ENCODE measurements at regions of chr9 and their contacts with region 1.

Region 1: GRCh38 chr9:129884220-129885017 is 49.2 kb downstream of the USP20 start:
- DNase-seq: peak; percentile 83 to 91 (median 83)
- H3K4me3 ChIP-seq: peak overlapping the region; percentile 56 to 90 (median 70)
- H3K4me3 Mint-ChIP-seq: peak overlapping the region; percentile 85 to 95
- H3K27ac ChIP-seq: peak overlapping the region; percentile 84 to 92
- H3K27ac Mint-ChIP-seq: peak overlapping the region; percentile 92 to 98 (median 97)
- H3K4me1 ChIP-seq: peaks cover 53 to 57% of the 10 kb centered on the region in 2 donors
- H3K4me1 Mint-ChIP-seq: peaks cover 52% of the 10 kb centered on the region
- H3K27me3 ChIP-seq: no peaks in the 10 kb centered on the region
- H3K27me3 Mint-ChIP-seq: peaks cover 0 to 3% (median 0%) of the 10 kb centered on the region in 3 donors
- CTCF ChIP-seq: no peak

Region 2: GRCh38 chr9:129835021-129835871 is 49.2 kb before region 1 on chr9 and contains the starts of genes C9orf78 and USP20:
- intact Hi-C with region 1: no loop called
- DNase-seq: peak; percentile 93 to 95 (median 95)
- H3K4me3 ChIP-seq: peak within 1 kb of the TSS; percentile 54 to 88 (median 87)
- H3K4me3 Mint-ChIP-seq: peak within 1 kb of the TSS; percentile 97 to 98
- H3K27ac ChIP-seq: peak within 1 kb of the TSS; percentile 87 to 94
- H3K27ac Mint-ChIP-seq: peak within 1 kb of the TSS; percentile 95 to 98 (median 97)
- H3K4me1 ChIP-seq: peaks cover 20 to 26% of the 10 kb centered on the region in 2 donors
- H3K4me1 Mint-ChIP-seq: peaks cover 32% of the 10 kb centered on the region
- H3K27me3 ChIP-seq: no peaks in the 10 kb centered on the region
- H3K27me3 Mint-ChIP-seq: peaks cover 0 to 3% (median 1%) of the 10 kb centered on the region in 3 donors
- CTCF ChIP-seq: no peak
- polyA plus RNA-seq, gene C9orf78: 53.3 to 82.4 (median 65.5) TPM
- polyA plus RNA-seq, gene USP20: 2.7 to 30.0 (median 5.2) TPM

Region 3: GRCh38 chr9:129944506-129945116 is 60.2 kb after region 1 on chr9:
- intact Hi-C with region 1: loop called (anchors 2 to 5 kb)
- DNase-seq: peak; percentile 80 to 91 (median 87)
- H3K4me3 ChIP-seq: peak overlapping the region in 1 of 3 experiments; percentile 65
- H3K4me3 Mint-ChIP-seq: no peak overlapping the region
- H3K27ac ChIP-seq: peak overlapping the region; percentile 35 to 91
- H3K27ac Mint-ChIP-seq: peak overlapping the region; percentile 90 to 96 (median 95)
- H3K4me1 ChIP-seq: peaks cover 46 to 66% of the 10 kb centered on the region in 2 donors
- H3K4me1 Mint-ChIP-seq: peaks cover 42% of the 10 kb centered on the region
- H3K27me3 ChIP-seq: no peaks in the 10 kb centered on the region
- H3K27me3 Mint-ChIP-seq: no peaks in the 10 kb centered on the region
- CTCF ChIP-seq: peak; percentile 50

Region 4: GRCh38 chr9:129995409-129996160 is 111.2 kb after region 1 on chr9:
- intact Hi-C with region 1: loop called in 1 of 2 experiments (anchors 5 kb)
- DNase-seq: peak; percentile 65 to 86 (median 81)
- H3K4me3 ChIP-seq: peak overlapping the region in 2 of 3 experiments; percentile 29 to 65
- H3K4me3 Mint-ChIP-seq: peak overlapping the region; percentile 57 to 92
- H3K27ac ChIP-seq: peak overlapping the region; percentile 96 to 100
- H3K27ac Mint-ChIP-seq: peak overlapping the region; percentile 99 to 100 (median 99)
- H3K4me1 ChIP-seq: peaks cover 35 to 43% of the 10 kb centered on the region in 2 donors
- H3K4me1 Mint-ChIP-seq: peaks cover 48% of the 10 kb centered on the region
- H3K27me3 ChIP-seq: no peaks in the 10 kb centered on the region
- H3K27me3 Mint-ChIP-seq: no peaks in the 10 kb centered on the region
- CTCF ChIP-seq: no peak

Region 5: DNA sequence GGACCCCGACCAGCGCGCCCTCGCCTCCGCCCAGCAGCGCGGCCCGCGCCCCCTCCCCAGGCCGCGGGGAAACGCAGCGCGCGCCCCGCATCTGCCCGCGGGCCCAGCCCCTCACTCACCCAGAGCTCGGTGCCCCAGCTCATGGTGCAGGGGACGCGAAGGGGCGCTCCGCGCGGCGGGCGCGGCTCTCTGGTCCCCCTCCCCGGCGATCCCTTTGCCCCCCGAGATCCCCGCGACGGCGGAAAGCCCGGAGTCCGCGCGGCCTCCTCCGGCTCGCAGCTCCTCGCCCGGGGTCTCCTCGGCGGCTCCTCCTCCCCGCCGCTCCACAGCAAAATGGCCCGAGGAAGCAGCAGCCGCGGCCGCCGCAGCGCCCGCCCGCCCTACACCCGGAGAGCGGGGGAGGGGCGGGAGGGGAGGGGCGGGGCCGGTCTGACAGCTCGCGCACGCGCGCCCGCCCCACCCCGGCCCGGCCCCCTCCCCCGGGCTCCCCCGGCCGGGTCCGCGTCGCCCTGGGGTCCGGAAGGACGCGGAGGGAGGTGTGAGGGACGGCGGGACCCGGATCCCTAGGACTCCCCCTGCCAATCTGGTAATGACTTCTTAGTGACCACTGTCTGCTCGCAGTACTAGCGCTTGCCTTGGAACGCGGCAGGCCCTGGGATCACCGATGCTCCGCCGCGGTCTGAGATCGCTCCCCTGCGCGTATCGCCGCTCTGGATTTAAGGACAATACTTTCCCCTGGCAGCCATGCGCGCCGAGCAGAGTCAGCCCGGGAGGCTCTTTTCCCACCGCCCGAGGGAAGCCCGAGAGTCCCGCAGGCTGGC is 158.6 kb after region 1 on chr9 and contains the start of gene FNBP1:
- intact Hi-C with region 1: loop called (anchors 5 kb)
- DNase-seq: peak; percentile 68 to 76 (median 71)
- H3K4me3 ChIP-seq: peak within 1 kb of the TSS; percentile 92 to 97 (median 96)
- H3K4me3 Mint-ChIP-seq: peak within 1 kb of the TSS; percentile 100
- H3K27ac ChIP-seq: peak within 1 kb of the TSS; percentile 85 to 90
- H3K27ac Mint-ChIP-seq: peak within 1 kb of the TSS; percentile 94 to 100 (median 96)
- H3K4me1 ChIP-seq: peaks cover 64 to 77% of the 10 kb centered on the region in 2 donors
- H3K4me1 Mint-ChIP-seq: peaks cover 58% of the 10 kb centered on the region
- H3K27me3 ChIP-seq: no peaks in the 10 kb centered on the region
- H3K27me3 Mint-ChIP-seq: no peaks in the 10 kb centered on the region
- CTCF ChIP-seq: no peak
- polyA plus RNA-seq, gene FNBP1: 37.6 to 60.7 (median 51.4) TPM

Region 6: GRCh38 chr9:130090915-130091314 is 206.5 kb after region 1 on chr9:
- intact Hi-C with region 1: loop called (anchors 10 kb)
- DNase-seq: no peak
- H3K4me3 ChIP-seq: no peak overlapping the region
- H3K4me3 Mint-ChIP-seq: no peak overlapping the region
- H3K27ac ChIP-seq: no peak overlapping the region
- H3K27ac Mint-ChIP-seq: peak overlapping the region in 1 of 7 donors; percentile 51
- H3K4me1 ChIP-seq: no peaks in the 10 kb centered on the region
- H3K4me1 Mint-ChIP-seq: no peaks in the 10 kb centered on the region
- H3K27me3 ChIP-seq: no peaks in the 10 kb centered on the region
- H3K27me3 Mint-ChIP-seq: peaks cover 0 to 1% (median 0%) of the 10 kb centered on the region in 3 donors
- CTCF ChIP-seq: no peak

Region 7: GRCh38 chr9:130235897-130236668 is 351.7 kb after region 1 on chr9:
- intact Hi-C with region 1: loop called in 1 of 2 experiments (anchors 10 kb)
- DNase-seq: peak; percentile 45 to 67 (median 60)
- H3K4me3 ChIP-seq: no peak overlapping the region
- H3K4me3 Mint-ChIP-seq: peak overlapping the region in 1 of 2 donors; percentile 62
- H3K27ac ChIP-seq: no peak overlapping the region
- H3K27ac Mint-ChIP-seq: no peak overlapping the region
- H3K4me1 ChIP-seq: peaks cover 5 to 11% of the 10 kb centered on the region in 2 donors
- H3K4me1 Mint-ChIP-seq: peaks cover 13% of the 10 kb centered on the region
- H3K27me3 ChIP-seq: no peaks in the 10 kb centered on the region
- H3K27me3 Mint-ChIP-seq: peaks cover 3% of the 10 kb centered on the region in 3 donors
- CTCF ChIP-seq: peak; percentile 100